HepG2 (cell line): ENCODE measurements at regions of chr12 and their contacts with region 1.

Region 1: GRCh38 chr12:109597795-109598427 is 24.3 kb downstream of the MVK start:
- DNase-seq: peak; percentile 75
- ATAC-seq: peak; percentile 87
- H3K4me3 ChIP-seq: peak overlapping the region; percentile 44 to 71 (median 46)
- H3K27ac ChIP-seq: peak overlapping the region; percentile 63
- H3K4me1 ChIP-seq: peaks cover 36% of the 10 kb centered on the region
- H3K27me3 ChIP-seq: no peaks in the 10 kb centered on the region; a peak in 1 of 5 replicates
- CTCF ChIP-seq: peak; percentile 97
- EP300 ChIP-seq: no peak
- POLR2A ChIP-seq: peak; percentile 42 to 65; a peak in 3 of 4 replicates
- RAD21 ChIP-seq: peak; percentile 97

Region 2: GRCh38 chr12:109477185-109477962 is 120.5 kb before region 1 on chr12 and contains the starts of genes KCTD10 and UBE3B:
- CTCF ChIA-PET with region 1: no interaction called
- POLR2A ChIA-PET with region 1: no interaction called
- in situ Hi-C with region 1: no loop called
- intact Hi-C with region 1: no loop called
- DNase-seq: peak; percentile 72
- ATAC-seq: peak; percentile 96
- H3K4me3 ChIP-seq: peak within 1 kb of the TSS; percentile 95 to 98 (median 95)
- H3K27ac ChIP-seq: peak within 1 kb of the TSS; percentile 94
- H3K4me1 ChIP-seq: peaks cover 39% of the 10 kb centered on the region
- H3K27me3 ChIP-seq: no peaks in the 10 kb centered on the region; a peak in 1 of 5 replicates
- CTCF ChIP-seq: peak; percentile 12; the same call in 1 of the 2 replicates
- EP300 ChIP-seq: no peak
- POLR2A ChIP-seq: peak; percentile 67 to 71
- RAD21 ChIP-seq: no peak
- total RNA-seq, gene KCTD10: 6.9 and 12.5 TPM in 2 replicates
- total RNA-seq, gene UBE3B: 25.3 and 31.5 TPM in 2 replicates

Region 3: GRCh38 chr12:109518820-109519665 is 78.9 kb before region 1 on chr12:
- CTCF ChIA-PET with region 1: no interaction called
- POLR2A ChIA-PET with region 1: no interaction called
- in situ Hi-C with region 1: no loop called
- intact Hi-C with region 1: loop called (anchors 5 kb)
- DNase-seq: peak; percentile 43
- ATAC-seq: peak; percentile 85
- H3K4me3 ChIP-seq: no peak overlapping the region
- H3K27ac ChIP-seq: no peak overlapping the region
- H3K4me1 ChIP-seq: peaks cover 6% of the 10 kb centered on the region
- H3K27me3 ChIP-seq: no peaks in the 10 kb centered on the region
- CTCF ChIP-seq: peak; percentile 86
- EP300 ChIP-seq: no peak
- POLR2A ChIP-seq: no peak
- RAD21 ChIP-seq: peak; percentile 58

Region 4: DNA sequence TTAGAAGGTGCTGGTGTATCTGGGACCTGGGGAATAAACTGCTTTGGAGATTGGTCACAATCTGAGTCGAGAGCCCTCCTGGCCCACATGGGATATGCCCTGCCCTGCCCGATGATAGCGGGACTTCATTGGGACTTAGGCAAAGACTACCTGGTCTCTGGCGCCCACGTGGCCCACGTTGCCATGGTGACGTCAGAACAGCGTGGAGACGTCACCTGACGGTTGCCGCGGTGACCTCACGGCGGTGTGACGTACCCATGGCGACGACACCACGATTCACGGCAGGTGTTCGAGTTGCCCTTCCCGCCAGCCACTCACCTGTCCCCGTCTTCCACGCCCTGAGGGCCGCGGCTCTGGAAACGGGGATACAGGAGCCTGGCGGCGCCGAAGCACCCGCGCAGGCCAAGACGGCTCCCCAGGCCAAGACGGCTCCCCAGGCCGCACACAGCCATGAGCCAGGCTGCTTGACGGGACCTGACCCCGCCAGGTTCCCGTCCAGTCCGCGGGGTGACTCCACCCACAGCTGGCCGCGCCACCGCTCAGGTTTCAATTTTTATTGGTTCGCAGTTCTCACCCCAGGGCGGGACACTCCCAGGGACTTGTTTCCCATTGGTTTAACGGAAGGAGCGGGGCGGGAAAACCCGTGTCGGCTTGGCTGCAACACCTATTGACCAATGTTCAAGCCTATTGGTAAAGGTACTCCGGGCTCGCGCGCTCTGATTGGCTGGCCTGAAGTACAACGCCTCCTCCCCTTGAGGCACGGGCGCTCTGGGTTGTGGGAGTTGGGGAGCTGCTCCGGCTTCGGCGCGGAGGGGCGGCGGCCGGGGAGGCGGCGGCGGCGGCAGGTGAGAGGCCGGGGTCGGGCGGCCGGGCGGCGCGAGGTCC is 24.6 kb before region 1 on chr12 and contains the starts of genes MMAB and MVK:
- CTCF ChIA-PET with region 1: no interaction called
- POLR2A ChIA-PET with region 1: interaction called, 20 read pairs
- in situ Hi-C with region 1: no loop called
- intact Hi-C with region 1: no loop called
- DNase-seq: peak; percentile 99
- ATAC-seq: peak; percentile 95
- H3K4me3 ChIP-seq: peak within 1 kb of the TSS; percentile 57 to 79 (median 69)
- H3K27ac ChIP-seq: peak within 1 kb of the TSS; percentile 83
- H3K4me1 ChIP-seq: peaks cover 70% of the 10 kb centered on the region
- H3K27me3 ChIP-seq: no peaks in the 10 kb centered on the region
- CTCF ChIP-seq: no peak
- EP300 ChIP-seq: peak; percentile 49 to 52; a peak in 2 of 4 replicates
- POLR2A ChIP-seq: peak; percentile 84 to 86
- RAD21 ChIP-seq: peak; percentile 56
- total RNA-seq, gene MMAB: 77.3 and 112 TPM in 2 replicates
- total RNA-seq, gene MVK: 47.1 and 66.9 TPM in 2 replicates

Region 5: GRCh38 chr12:109586385-109587296 is 11.3 kb before region 1 on chr12:
- CTCF ChIA-PET with region 1: no interaction called
- POLR2A ChIA-PET with region 1: interaction called, 14 read pairs
- in situ Hi-C with region 1: no loop called
- intact Hi-C with region 1: no loop called
- DNase-seq: peak; percentile 82
- ATAC-seq: peak; percentile 58
- H3K4me3 ChIP-seq: peak overlapping the region in 1 of 3 experiments; percentile 30; a peak in 1 of 6 replicates
- H3K27ac ChIP-seq: peak overlapping the region; percentile 83
- H3K4me1 ChIP-seq: peaks cover 55% of the 10 kb centered on the region
- H3K27me3 ChIP-seq: no peaks in the 10 kb centered on the region
- CTCF ChIP-seq: no peak
- EP300 ChIP-seq: peak in 1 of 2 experiments; percentile 37; a peak in 1 of 4 replicates
- POLR2A ChIP-seq: no peak
- RAD21 ChIP-seq: no peak; the same call in 1 of the 2 replicates

Region 6: GRCh38 chr12:109713187-109713984 is 115.5 kb after region 1 on chr12 and contains the start of gene FAM222A:
- CTCF ChIA-PET with region 1: interaction called, 7 read pairs
- POLR2A ChIA-PET with region 1: interaction called, 35 read pairs
- in situ Hi-C with region 1: loop called (anchors 5 kb)
- intact Hi-C with region 1: loop called (anchors 1 kb)
- DNase-seq: peak; percentile 94
- ATAC-seq: peak; percentile 62
- H3K4me3 ChIP-seq: peak within 1 kb of the TSS; percentile 72 to 82 (median 74)
- H3K27ac ChIP-seq: peak within 1 kb of the TSS; percentile 65
- H3K4me1 ChIP-seq: peaks cover 82% of the 10 kb centered on the region
- H3K27me3 ChIP-seq: no peaks in the 10 kb centered on the region
- CTCF ChIP-seq: no peak
- EP300 ChIP-seq: no peak
- POLR2A ChIP-seq: peak in 1 of 2 experiments; percentile 76; a peak in 2 of 4 replicates
- RAD21 ChIP-seq: no peak
- total RNA-seq, gene FAM222A: 7.2 and 9.6 TPM in 2 replicates